CD4-positive, alpha-beta T cell (primary cell): ENCODE measurements at regions of chr1 and their contacts with region 1.

Region 1: GRCh38 chr1:8465013-8465412 is 147.1 kb downstream of the SLC45A1 start:
- DNase-seq: no peak
- ATAC-seq: no peak
- H3K4me3 ChIP-seq: no peak overlapping the region
- H3K4me3 Mint-ChIP-seq: no peak overlapping the region
- H3K27ac ChIP-seq: no peak overlapping the region
- H3K27ac Mint-ChIP-seq: peak overlapping the region; percentile 82
- H3K4me1 ChIP-seq: peaks cover 16% of the 10 kb centered on the region
- H3K4me1 Mint-ChIP-seq: peaks cover 48% of the 10 kb centered on the region
- H3K27me3 ChIP-seq: no peaks in the 10 kb centered on the region
- H3K27me3 Mint-ChIP-seq: no peaks in the 10 kb centered on the region
- CTCF ChIP-seq: no peak

Region 2: GRCh38 chr1:8510041-8510823 is 45.2 kb after region 1 on chr1:
- CTCF ChIA-PET with region 1: no interaction called
- POLR2A ChIA-PET with region 1: no interaction called
- intact Hi-C with region 1: loop called in 1 of 2 experiments (anchors 5 kb)
- DNase-seq: peak in 11 of 14 experiments; percentile 5 to 83 (median 44)
- ATAC-seq: peak; percentile 92
- H3K4me3 ChIP-seq: peak overlapping the region; percentile 19
- H3K4me3 Mint-ChIP-seq: peak overlapping the region; percentile 67
- H3K27ac ChIP-seq: peak overlapping the region; percentile 57 to 76
- H3K27ac Mint-ChIP-seq: peak overlapping the region; percentile 89
- H3K4me1 ChIP-seq: peaks cover 35% of the 10 kb centered on the region
- H3K4me1 Mint-ChIP-seq: peaks cover 53% of the 10 kb centered on the region
- H3K27me3 ChIP-seq: no peaks in the 10 kb centered on the region
- H3K27me3 Mint-ChIP-seq: no peaks in the 10 kb centered on the region
- CTCF ChIP-seq: no peak

Region 3: GRCh38 chr1:8533907-8534306 is 68.9 kb after region 1 on chr1:
- CTCF ChIA-PET with region 1: no interaction called
- POLR2A ChIA-PET with region 1: no interaction called
- intact Hi-C with region 1: loop called in 1 of 2 experiments (anchors 2 kb)
- DNase-seq: no peak
- ATAC-seq: no peak
- H3K4me3 ChIP-seq: no peak overlapping the region
- H3K4me3 Mint-ChIP-seq: no peak overlapping the region
- H3K27ac ChIP-seq: no peak overlapping the region
- H3K27ac Mint-ChIP-seq: peak overlapping the region; percentile 86
- H3K4me1 ChIP-seq: no peaks in the 10 kb centered on the region
- H3K4me1 Mint-ChIP-seq: peaks cover 22% of the 10 kb centered on the region
- H3K27me3 ChIP-seq: no peaks in the 10 kb centered on the region
- H3K27me3 Mint-ChIP-seq: no peaks in the 10 kb centered on the region
- CTCF ChIP-seq: no peak